CD8-positive, alpha-beta T cell (primary cell): ENCODE measurements at regions of chr18 and their contacts with region 1.

Region 1: DNA sequence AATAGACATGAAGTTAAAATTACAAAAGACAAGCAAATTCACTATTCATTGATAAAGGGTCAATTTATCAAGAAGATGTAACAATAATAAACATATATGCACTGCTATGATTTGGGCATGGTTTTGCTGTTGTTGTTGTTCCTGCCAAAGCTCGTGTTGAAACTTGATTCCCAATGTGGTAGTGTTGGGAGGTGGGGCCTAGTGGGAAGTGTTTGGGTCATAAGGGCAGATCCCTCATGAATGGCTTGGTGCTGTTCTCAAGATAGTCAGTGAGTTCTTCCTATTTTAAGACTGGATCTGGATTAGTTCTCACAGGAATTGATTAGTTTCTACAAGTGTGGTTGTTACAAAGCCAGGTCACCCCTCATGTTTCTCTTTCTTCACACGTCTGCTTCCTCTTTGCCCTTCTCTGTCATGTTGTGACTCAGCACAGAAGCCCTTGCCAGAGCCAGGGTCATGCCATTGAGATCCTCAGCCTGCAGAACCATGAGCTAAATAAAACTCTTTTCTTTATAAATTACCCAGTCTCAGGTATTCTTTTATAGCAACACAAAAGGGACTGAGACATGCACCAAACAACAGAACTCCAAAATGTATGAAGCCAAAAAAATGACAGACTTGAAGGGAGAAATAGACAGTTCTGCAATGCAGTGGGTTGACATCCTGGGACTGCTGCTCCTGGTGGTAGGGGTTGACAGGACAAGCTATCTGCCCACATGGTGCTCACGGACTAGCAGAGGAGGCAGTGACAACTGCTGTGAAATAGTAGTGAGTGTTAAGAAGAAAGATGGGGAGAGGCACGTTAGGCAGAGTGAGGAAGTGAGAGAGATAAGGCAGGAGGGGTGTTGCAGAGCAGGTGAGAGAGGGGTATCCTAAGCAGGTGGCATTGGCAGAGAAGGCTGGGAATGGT is 18.6 kb upstream of the SKA1 start:
- DNase-seq: peak in 2 of 9 experiments; percentile 27 to 37
- ATAC-seq: peak; percentile 27
- H3K4me3 ChIP-seq: no peak overlapping the region
- H3K4me3 Mint-ChIP-seq: peak overlapping the region; percentile 33
- H3K27ac ChIP-seq: no peak overlapping the region
- H3K27ac Mint-ChIP-seq: peak overlapping the region; percentile 10
- H3K4me1 ChIP-seq: peaks cover 6% of the 10 kb centered on the region
- H3K4me1 Mint-ChIP-seq: peaks cover 8% of the 10 kb centered on the region
- H3K27me3 ChIP-seq: no peaks in the 10 kb centered on the region
- H3K27me3 Mint-ChIP-seq: peaks cover 23% of the 10 kb centered on the region
- CTCF ChIP-seq: no peak

Region 2: GRCh38 chr18:49510393-49511115 is 845.7 kb before region 1 on chr18:
- CTCF ChIA-PET with region 1: interaction called, 14 read pairs
- POLR2A ChIA-PET with region 1: interaction called, 3 read pairs
- intact Hi-C with region 1: loop called (anchors 1 kb)
- DNase-seq: peak; percentile 15 to 78 (median 51)
- ATAC-seq: peak; percentile 76
- H3K4me3 ChIP-seq: no peak overlapping the region
- H3K4me3 Mint-ChIP-seq: no peak overlapping the region
- H3K27ac ChIP-seq: no peak overlapping the region
- H3K27ac Mint-ChIP-seq: no peak overlapping the region
- H3K4me1 ChIP-seq: no peaks in the 10 kb centered on the region
- H3K4me1 Mint-ChIP-seq: no peaks in the 10 kb centered on the region
- H3K27me3 ChIP-seq: peaks cover 0 to 3% of the 10 kb centered on the region in 2 experiments
- H3K27me3 Mint-ChIP-seq: peaks cover 22% of the 10 kb centered on the region
- CTCF ChIP-seq: peak; percentile 76

Region 3: GRCh38 chr18:49630246-49630699 is 726.0 kb before region 1 on chr18:
- CTCF ChIA-PET with region 1: no interaction called
- POLR2A ChIA-PET with region 1: no interaction called
- intact Hi-C with region 1: loop called in 1 of 2 experiments (anchors 10 kb)
- DNase-seq: no peak
- ATAC-seq: no peak
- H3K4me3 ChIP-seq: no peak overlapping the region
- H3K4me3 Mint-ChIP-seq: no peak overlapping the region
- H3K27ac ChIP-seq: no peak overlapping the region
- H3K27ac Mint-ChIP-seq: no peak overlapping the region
- H3K4me1 ChIP-seq: no peaks in the 10 kb centered on the region
- H3K4me1 Mint-ChIP-seq: no peaks in the 10 kb centered on the region
- H3K27me3 ChIP-seq: no peaks in the 10 kb centered on the region
- H3K27me3 Mint-ChIP-seq: peaks cover 5% of the 10 kb centered on the region
- CTCF ChIP-seq: no peak

Region 4: GRCh38 chr18:50009773-50010335 is 346.4 kb before region 1 on chr18:
- CTCF ChIA-PET with region 1: interaction called, 10 read pairs
- POLR2A ChIA-PET with region 1: no interaction called
- intact Hi-C with region 1: loop called (anchors 1 kb)
- DNase-seq: peak in 8 of 9 experiments; percentile 2 to 60 (median 28)
- ATAC-seq: peak; percentile 82
- H3K4me3 ChIP-seq: no peak overlapping the region
- H3K4me3 Mint-ChIP-seq: no peak overlapping the region
- H3K27ac ChIP-seq: no peak overlapping the region
- H3K27ac Mint-ChIP-seq: no peak overlapping the region
- H3K4me1 ChIP-seq: no peaks in the 10 kb centered on the region
- H3K4me1 Mint-ChIP-seq: no peaks in the 10 kb centered on the region
- H3K27me3 ChIP-seq: no peaks in the 10 kb centered on the region
- H3K27me3 Mint-ChIP-seq: peaks cover 3% of the 10 kb centered on the region
- CTCF ChIP-seq: no peak

Region 5: DNA sequence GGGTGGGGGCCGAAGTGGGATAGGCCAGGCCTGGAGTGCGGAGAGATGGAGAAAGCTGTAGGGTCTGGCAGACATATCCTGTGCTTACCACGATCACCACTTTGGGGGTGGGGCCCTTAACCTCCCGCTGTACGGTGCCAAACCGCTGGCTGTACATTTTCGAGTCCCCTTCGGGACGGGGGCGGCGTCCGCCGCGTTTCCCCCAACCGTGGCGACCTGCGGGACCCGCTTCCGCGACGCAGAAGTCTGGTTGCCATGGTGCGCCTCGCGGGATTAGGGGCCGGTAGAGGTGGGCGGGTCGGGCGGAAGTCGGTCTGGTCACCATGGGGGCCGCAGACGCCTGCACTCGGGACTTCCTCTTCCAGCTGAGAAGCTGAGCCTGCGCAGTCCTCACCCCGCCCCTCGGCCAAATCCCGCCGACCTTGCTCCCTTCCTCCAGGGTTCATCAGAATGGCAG is 90.0 kb before region 1 on chr18 and contains the start of gene CFAP53:
- CTCF ChIA-PET with region 1: interaction called, 34 read pairs
- POLR2A ChIA-PET with region 1: interaction called, 5 read pairs
- intact Hi-C with region 1: loop called in 1 of 2 experiments (anchors 1 kb)
- DNase-seq: peak; percentile 58 to 93 (median 86)
- ATAC-seq: peak; percentile 83
- H3K4me3 ChIP-seq: peak within 1 kb of the TSS; percentile 38 to 67
- H3K4me3 Mint-ChIP-seq: peak within 1 kb of the TSS; percentile 88
- H3K27ac ChIP-seq: peak within 1 kb of the TSS; percentile 43 to 85
- H3K27ac Mint-ChIP-seq: peak within 1 kb of the TSS; percentile 85
- H3K4me1 ChIP-seq: peaks cover 18% of the 10 kb centered on the region
- H3K4me1 Mint-ChIP-seq: peaks cover 24% of the 10 kb centered on the region
- H3K27me3 ChIP-seq: no peaks in the 10 kb centered on the region
- H3K27me3 Mint-ChIP-seq: no peaks in the 10 kb centered on the region
- CTCF ChIP-seq: no peak
- total RNA-seq, gene CFAP53: 0.22 to 0.36 TPM

Region 6: GRCh38 chr18:50287441-50288347 is 68.6 kb before region 1 on chr18 and contains the start of gene CXXC1:
- CTCF ChIA-PET with region 1: interaction called, 4 read pairs
- POLR2A ChIA-PET with region 1: no interaction called
- intact Hi-C with region 1: loop called (anchors 1 to 5 kb)
- DNase-seq: peak; percentile 96 to 100 (median 97)
- ATAC-seq: peak; percentile 88
- H3K4me3 ChIP-seq: peak within 1 kb of the TSS; percentile 91 to 98
- H3K4me3 Mint-ChIP-seq: peak within 1 kb of the TSS; percentile 99
- H3K27ac ChIP-seq: peak within 1 kb of the TSS; percentile 91 to 99
- H3K27ac Mint-ChIP-seq: peak within 1 kb of the TSS; percentile 99
- H3K4me1 ChIP-seq: peaks cover 14% of the 10 kb centered on the region
- H3K4me1 Mint-ChIP-seq: peaks cover 34% of the 10 kb centered on the region
- H3K27me3 ChIP-seq: no peaks in the 10 kb centered on the region
- H3K27me3 Mint-ChIP-seq: no peaks in the 10 kb centered on the region
- CTCF ChIP-seq: peak; percentile 22
- total RNA-seq, gene CXXC1: 107 to 119 TPM

Region 7: GRCh38 chr18:50374753-50375391 is 18.6 kb after region 1 on chr18 and contains the start of gene SKA1:
- CTCF ChIA-PET with region 1: interaction called, 12 read pairs
- POLR2A ChIA-PET with region 1: no interaction called
- intact Hi-C with region 1: no loop called
- DNase-seq: peak; percentile 82 to 95 (median 91)
- ATAC-seq: peak; percentile 100
- H3K4me3 ChIP-seq: peak within 1 kb of the TSS; percentile 68 to 70
- H3K4me3 Mint-ChIP-seq: peak within 1 kb of the TSS; percentile 79
- H3K27ac ChIP-seq: peak within 1 kb of the TSS; percentile 57 to 76
- H3K27ac Mint-ChIP-seq: peak within 1 kb of the TSS; percentile 88
- H3K4me1 ChIP-seq: peaks cover 14% of the 10 kb centered on the region
- H3K4me1 Mint-ChIP-seq: peaks cover 12% of the 10 kb centered on the region
- H3K27me3 ChIP-seq: peaks cover 0 to 6% of the 10 kb centered on the region in 2 experiments
- H3K27me3 Mint-ChIP-seq: peaks cover 10% of the 10 kb centered on the region
- CTCF ChIP-seq: no peak
- total RNA-seq, gene SKA1: 0.22 to 0.27 TPM

Region 8: GRCh38 chr18:50424877-50425690 is 68.8 kb after region 1 on chr18:
- CTCF ChIA-PET with region 1: no interaction called
- POLR2A ChIA-PET with region 1: no interaction called
- intact Hi-C with region 1: no loop called
- DNase-seq: no peak
- ATAC-seq: no peak
- H3K4me3 ChIP-seq: no peak overlapping the region
- H3K4me3 Mint-ChIP-seq: no peak overlapping the region
- H3K27ac ChIP-seq: no peak overlapping the region
- H3K27ac Mint-ChIP-seq: no peak overlapping the region
- H3K4me1 ChIP-seq: no peaks in the 10 kb centered on the region
- H3K4me1 Mint-ChIP-seq: no peaks in the 10 kb centered on the region
- H3K27me3 ChIP-seq: peaks cover 0 to 4% of the 10 kb centered on the region in 2 experiments
- H3K27me3 Mint-ChIP-seq: peaks cover 18% of the 10 kb centered on the region
- CTCF ChIP-seq: no peak